Ascending aorta (tissue), 2 donors: ENCODE measurements at regions of chr9 and their contacts with region 1.

Region 1: GRCh38 chr9:136482793-136483588 is at the start of gene SEC16A:
- DNase-seq: peak; percentile 93 to 99
- H3K4me3 ChIP-seq: peak within 1 kb of the TSS; percentile 71 to 82
- H3K27ac ChIP-seq: peak within 1 kb of the TSS; percentile 98 to 100
- H3K4me1 ChIP-seq: peaks cover 15 to 16% of the 10 kb centered on the region in 2 donors
- H3K27me3 ChIP-seq: no peaks in the 10 kb centered on the region
- CTCF ChIP-seq: no peak
- total RNA-seq, gene SEC16A: 66.1 TPM

Region 2: DNA sequence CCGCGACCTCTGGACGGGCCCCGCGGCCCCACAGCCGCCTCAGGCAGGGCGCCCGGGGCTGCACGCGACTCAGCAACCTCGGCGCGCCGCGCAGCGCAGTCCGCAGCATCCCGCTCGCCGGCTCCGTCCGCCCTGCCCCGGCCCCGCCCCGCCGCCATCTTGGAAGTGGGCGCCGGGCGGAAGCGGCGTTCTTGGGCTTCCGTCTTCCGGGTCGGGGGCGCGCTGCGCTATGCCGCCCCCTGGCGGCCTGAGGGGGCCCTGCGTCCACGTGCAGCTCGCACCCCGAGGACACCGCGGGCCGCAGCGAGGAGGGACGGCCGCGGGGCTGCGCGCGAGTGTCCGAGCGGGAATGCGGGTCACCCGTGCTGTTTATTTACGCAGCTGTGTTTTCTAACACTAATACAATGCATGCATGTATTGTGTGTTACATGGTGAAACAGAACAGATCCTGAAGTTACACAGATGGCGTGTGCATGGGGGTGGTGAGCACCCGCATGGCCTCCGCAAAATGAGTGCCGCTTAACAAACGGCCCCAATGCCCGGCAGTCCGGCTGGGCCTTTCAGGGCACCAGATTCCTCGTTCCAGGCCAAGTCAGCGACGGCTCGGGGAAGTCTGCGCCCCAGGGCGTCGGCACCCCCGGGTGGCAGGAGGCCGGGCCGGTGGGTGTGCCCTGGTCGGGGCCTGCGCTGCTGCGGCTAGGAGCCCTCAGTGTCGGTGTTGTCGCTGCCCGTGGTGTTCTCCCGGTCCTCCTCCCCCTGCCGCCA is 119.2 kb before region 1 on chr9 and contains the start of gene DNLZ:
- intact Hi-C with region 1: loop called (anchors 1 kb)
- DNase-seq: peak in 1 of 2 donors; percentile 92
- H3K4me3 ChIP-seq: peak within 1 kb of the TSS; percentile 86 to 97
- H3K27ac ChIP-seq: peak within 1 kb of the TSS; percentile 85 to 90
- H3K4me1 ChIP-seq: peaks cover 5 to 8% of the 10 kb centered on the region in 2 donors
- H3K27me3 ChIP-seq: no peaks in the 10 kb centered on the region
- CTCF ChIP-seq: peak; percentile 94 to 99 (median 97)
- total RNA-seq, gene DNLZ: 191 TPM

Region 3: DNA sequence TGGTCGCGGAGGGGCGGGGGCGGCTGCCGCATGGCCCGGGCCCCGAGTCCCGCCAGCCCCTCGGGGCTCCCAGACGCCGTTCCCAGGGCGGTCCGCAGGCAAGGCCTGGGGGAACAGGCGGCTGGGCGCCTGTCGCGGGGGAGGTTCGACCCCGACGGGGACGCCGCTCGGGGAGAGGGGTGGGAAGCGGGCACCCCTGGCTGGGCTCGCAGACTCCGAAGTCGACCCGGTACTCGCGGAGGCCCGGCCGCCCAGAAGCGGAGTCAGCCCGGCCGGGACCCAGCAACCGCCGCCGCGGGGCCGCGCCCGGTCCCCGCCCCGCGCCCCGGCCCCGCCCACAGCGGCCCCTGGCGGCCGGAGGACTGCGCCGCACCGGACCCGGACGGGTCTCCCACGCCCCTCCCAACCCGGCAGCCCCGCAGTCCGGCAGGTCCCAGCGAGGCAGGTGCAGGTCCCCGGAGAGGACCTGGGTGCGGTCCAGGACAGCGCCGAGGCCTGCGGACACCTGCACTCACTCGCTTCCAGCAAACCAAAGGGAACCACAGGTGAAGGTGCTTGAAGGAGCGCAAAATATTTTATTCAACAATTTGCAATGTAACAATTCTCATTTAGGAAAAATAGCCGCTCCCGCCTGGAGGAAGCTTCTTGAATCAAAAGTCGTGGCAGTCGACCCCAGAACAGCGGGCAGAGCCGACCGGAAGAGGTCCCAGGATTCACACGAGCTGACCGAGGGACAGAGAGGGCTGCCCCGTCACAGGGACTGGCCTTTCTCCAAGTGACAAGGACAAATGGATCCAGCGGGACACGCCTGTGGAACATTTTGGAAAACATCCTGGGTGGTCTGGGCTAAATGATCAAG is 43.2 kb before region 1 on chr9 and contains the start of gene INPP5E:
- intact Hi-C with region 1: loop called (anchors 2 kb)
- DNase-seq: peak in 1 of 2 donors; percentile 80
- H3K4me3 ChIP-seq: peak within 1 kb of the TSS; percentile 83 to 86
- H3K27ac ChIP-seq: peak within 1 kb of the TSS; percentile 6 to 47
- H3K4me1 ChIP-seq: peaks cover 14 to 15% of the 10 kb centered on the region in 2 donors
- H3K27me3 ChIP-seq: no peaks in the 10 kb centered on the region
- CTCF ChIP-seq: peak; percentile 49 to 84 (median 51)
- total RNA-seq, gene INPP5E: 20.2 TPM

Region 4: GRCh38 chr9:136572003-136572827 is 89.2 kb after region 1 on chr9:
- intact Hi-C with region 1: no loop called
- DNase-seq: peak in 1 of 2 donors; percentile 81
- H3K4me3 ChIP-seq: no peak overlapping the region
- H3K27ac ChIP-seq: peak overlapping the region; percentile 73 to 81
- H3K4me1 ChIP-seq: peaks cover 38 to 56% of the 10 kb centered on the region in 2 donors
- H3K27me3 ChIP-seq: no peaks in the 10 kb centered on the region
- CTCF ChIP-seq: no peak

Region 5: GRCh38 chr9:136728080-136728547 is 245.1 kb after region 1 on chr9:
- intact Hi-C with region 1: loop called (anchors 5 kb)
- DNase-seq: peak; percentile 54 to 91
- H3K4me3 ChIP-seq: peak overlapping the region; percentile 74 to 81
- H3K27ac ChIP-seq: peak overlapping the region in 1 of 2 donors; percentile 45
- H3K4me1 ChIP-seq: peaks cover 16 to 18% of the 10 kb centered on the region in 2 donors
- H3K27me3 ChIP-seq: no peaks in the 10 kb centered on the region
- CTCF ChIP-seq: peak; percentile 80 to 98 (median 86)

Region 6: DNA sequence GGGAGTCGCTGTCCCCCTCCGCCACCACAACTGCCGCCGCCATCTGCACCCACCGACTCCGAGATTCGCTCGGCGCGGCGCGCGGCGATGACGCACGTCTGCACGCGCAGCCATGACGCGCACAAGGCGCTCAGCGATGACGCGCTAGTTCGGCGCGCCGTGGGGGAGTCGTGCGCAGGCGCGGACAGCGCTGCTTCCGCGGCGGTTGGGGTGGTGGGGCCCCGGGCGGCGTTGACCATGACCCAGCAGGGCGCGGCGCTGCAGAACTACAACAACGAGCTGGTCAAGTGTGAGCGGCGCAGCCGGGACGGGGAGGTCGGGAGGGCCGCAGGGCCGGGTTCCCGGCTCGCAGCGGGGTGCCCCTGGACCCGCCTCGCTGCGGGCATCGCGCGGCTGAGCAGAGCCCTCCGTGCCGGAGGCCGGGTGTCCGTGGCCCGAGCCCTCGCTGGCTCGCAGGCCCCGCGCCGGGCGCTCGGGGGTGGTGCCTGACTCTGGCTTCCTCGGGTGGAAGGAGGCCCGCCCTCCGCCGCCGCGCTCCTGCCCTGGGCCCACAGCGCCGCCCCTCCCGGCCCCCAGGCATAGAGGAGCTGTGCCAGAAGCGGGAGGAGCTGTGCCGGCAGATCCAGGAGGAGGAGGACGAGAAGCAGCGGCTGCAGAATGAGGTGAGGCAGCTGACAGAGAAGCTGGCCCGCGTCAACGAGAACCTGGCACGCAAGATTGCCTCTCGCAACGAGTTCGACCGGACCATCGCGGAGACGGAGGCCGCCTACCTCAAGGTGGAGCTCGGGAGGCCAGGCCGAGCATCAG is 705.7 kb after region 1 on chr9 and contains the starts of genes ANAPC2 and SSNA1:
- intact Hi-C with region 1: loop called (anchors 1 kb)
- DNase-seq: peak; percentile 70 to 95
- H3K4me3 ChIP-seq: peak within 1 kb of the TSS; percentile 85 to 91
- H3K27ac ChIP-seq: peak within 1 kb of the TSS; percentile 86 to 89
- H3K4me1 ChIP-seq: peaks cover 23 to 38% of the 10 kb centered on the region in 2 donors
- H3K27me3 ChIP-seq: no peaks in the 10 kb centered on the region
- CTCF ChIP-seq: peak in 2 of 3 experiments; percentile 15 to 35
- total RNA-seq, gene ANAPC2: 24.1 TPM
- total RNA-seq, gene SSNA1: 123 TPM